Cardiac septum (tissue), 1 donor: ENCODE measurements at regions of chr19 and their contacts with region 1.

Region 1: DNA sequence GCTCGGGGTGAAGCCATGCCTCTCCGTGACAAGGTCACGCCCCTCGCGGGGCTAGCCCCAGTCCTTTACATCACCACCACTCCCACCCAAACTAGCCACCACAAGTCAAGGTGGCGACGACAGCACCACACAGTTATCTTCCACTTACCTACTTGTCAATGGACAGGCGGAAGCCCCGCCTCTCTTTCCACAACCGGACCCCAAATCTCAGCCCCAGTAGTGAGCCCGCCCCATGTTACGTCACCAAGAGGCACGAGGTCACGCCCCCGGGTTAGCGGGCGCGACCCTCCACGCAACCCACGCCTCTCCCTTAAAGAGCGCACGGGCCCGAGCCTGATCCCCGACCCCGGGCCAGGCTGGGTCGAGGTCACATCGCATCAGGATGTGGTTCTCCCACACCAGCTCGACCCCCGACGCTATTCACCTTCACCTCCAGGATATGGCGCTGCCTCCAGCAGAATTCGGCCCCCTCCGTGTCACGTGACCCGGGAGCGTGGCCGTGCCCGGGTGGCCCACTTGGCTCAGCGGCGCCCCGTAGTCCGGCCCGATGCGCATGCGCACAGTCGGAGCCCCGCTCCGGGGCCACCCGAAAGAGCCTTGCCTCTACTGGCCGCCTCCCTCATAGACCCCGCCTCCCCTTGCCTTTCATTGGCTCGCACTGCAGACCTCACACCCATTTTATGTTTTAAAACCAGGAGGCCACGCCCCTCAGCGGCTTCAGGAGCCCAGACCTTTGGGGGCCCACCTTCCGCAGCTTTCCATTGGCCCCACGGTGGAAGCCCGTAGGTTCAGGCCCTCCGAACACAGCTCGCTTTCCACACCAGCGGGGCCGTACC is 18.2 kb downstream of the SYDE1 start:
- DNase-seq: peak; percentile 97

Region 2: DNA sequence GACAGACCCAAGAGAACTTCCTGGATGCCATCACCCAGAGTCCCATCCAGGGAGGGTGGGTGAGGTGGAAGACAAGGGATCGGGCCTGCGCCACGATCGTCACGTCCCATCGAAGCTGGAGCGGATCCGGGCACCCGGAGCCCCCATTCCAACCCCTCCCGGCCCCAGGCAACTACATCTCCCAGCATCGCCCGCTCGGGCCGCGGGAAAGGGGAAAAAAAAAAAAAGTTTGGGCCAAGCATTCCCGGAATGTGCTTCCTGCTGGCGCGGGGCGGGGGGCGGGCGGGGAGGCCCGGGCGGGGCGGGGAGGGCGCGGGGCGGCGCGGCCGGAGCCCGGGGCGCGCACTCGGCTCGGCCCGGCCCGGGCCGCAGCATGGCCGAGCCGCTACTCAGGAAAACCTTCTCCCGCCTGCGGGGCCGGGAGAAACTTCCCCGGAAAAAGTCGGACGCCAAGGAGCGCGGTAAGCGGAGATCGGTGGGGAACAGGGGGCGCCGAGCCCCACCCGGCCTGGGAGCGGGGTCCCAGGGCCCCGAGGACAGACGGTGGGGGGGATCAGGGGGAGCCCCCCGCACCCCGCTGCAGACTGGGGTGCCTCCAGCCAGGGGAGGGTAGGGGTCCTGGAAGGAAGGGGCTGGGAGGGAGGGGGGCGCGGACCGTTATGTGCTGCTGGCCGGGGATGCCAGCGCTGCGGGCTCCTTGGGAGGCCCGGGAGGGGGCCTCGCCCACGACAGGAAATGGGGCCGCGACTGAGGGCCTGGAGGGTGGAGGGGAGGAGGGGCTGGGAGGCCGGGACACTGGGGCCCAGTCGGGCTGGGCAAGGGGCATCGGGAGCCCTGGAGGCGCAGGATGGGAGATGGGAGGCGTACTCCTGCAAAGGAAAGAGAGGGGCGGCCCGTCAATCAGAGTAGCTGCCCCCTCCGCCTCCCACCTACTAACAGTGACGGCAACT is 18.1 kb before region 1 on chr19 and contains the start of gene SYDE1:
- intact Hi-C with region 1: loop called (anchors 2 kb)
- DNase-seq: no peak
- total RNA-seq, gene SYDE1: 16.4 TPM